ENCODE measurements at regions of chr3 and their contacts with region 1.

Region 1: DNA sequence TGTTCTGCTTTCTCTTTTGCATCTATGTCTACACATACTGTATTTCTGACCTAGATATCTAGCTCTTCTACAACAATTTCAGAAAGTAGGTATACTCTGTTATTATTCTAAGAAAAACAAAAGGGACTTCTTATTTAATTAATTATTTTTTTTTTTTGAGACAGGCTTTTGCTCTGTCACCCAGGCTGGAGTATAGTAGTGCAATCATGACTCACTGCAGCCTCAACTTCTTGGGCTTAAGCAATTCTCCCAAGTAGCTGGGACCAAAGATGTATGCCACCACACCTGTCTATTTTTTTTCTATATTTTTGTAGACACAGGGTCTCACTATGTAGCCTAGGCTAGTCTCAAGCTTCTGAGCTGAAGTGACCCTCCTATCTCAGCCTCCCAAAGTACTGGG is 130.6 kb downstream of the MBNL1 start:
- DNase-seq: no peak
- ATAC-seq: no peak

Region 2: GRCh38 chr3:152087153-152087552 is 312.2 kb before region 1 on chr3:
- intact Hi-C with region 1: no loop called
- DNase-seq: no peak
- ATAC-seq: no peak

Region 3: GRCh38 chr3:152430223-152431002 is 31.0 kb after region 1 on chr3:
- intact Hi-C with region 1: loop called (anchors 5 kb)
- DNase-seq: no peak
- ATAC-seq: peak; percentile 94

Region 4: DNA sequence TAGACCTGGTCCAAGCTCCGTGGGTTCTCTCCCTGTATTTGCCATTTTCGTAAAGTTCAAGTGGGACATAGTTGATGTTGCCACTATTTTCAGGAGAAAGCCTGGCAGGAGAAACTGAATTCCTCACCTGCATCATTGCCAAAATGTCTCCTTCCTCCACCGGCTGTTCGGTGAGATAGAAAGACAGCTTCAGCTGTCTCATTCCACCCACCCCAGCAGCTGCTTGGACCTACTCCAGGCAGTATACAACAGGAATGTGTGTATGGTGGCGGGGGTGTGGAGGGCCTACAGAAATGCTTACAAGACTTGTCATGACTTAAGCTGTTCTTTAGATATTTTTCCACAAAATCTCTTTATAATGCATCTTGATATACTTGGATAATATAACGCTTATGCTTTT is 630.0 kb after region 1 on chr3:
- intact Hi-C with region 1: no loop called
- DNase-seq: no peak
- ATAC-seq: no peak

Measured in Right ventricle myocardium inferior (tissue), 1 donor.